Activated T-helper 2 cell treated with anti-CD3 and anti-CD28 coated beads, Interferon-gamma antibody, Interleukin-2, Interleukin-4, amounts not matched to agents 10 μg/mL and 5 μg/mL and 100 μg/mL, durations not matched to agents 14 hours and 24 hours and 36 hours (primary cell): ENCODE measurements at regions of chr7 and their contacts with region 1.

Region 1: GRCh38 chr7:816300-816750 is 16.0 kb upstream of the SUN1 start:
- DNase-seq: peak; percentile 95
- H3K4me3 Mint-ChIP-seq: peak overlapping the region; percentile 69
- H3K27ac Mint-ChIP-seq: no peak overlapping the region
- H3K4me1 Mint-ChIP-seq: peaks cover 41% of the 10 kb centered on the region
- H3K27me3 Mint-ChIP-seq: peaks cover 23% of the 10 kb centered on the region

Region 2: DNA sequence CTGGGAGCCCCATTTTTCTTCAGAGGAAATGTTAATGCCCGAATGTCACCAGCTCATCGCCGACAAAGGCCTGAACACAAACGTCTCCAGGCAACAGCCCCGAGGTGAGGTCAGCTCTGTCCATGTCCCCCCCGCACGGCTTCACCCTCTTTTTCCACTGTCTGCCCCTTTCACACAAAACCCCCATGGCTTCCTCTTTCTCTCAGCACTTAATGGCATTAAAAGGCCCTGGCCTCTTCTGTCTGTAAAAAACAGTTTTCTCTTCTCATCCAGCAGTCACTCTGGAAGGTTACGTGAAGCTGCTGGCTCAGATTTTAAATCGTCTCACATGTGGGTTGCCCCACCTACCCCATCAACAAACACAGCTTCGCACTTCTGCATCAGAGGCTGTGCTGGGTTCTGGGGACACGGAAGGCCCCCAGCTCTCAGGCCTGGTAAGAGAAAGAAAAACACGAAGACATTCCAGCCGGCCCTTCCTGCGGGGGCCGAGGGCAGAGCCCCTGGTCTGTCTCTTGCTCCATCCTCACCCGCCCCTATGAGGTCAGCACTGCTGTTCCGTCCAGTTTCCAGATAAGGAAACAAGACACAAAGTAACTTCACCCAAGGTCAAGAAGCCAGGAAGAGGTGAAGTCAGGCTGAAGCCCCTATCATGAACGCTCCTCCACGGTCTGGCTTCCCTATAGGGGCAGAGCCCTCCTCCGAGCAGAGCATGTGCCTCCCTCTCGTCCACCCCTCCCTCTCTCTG is 205.6 kb before region 1 on chr7:
- intact Hi-C with region 1: loop called (anchors 10 kb)
- DNase-seq: no peak
- H3K4me3 Mint-ChIP-seq: no peak overlapping the region
- H3K27ac Mint-ChIP-seq: peak overlapping the region; percentile 48
- H3K4me1 Mint-ChIP-seq: peaks cover 34% of the 10 kb centered on the region
- H3K27me3 Mint-ChIP-seq: no peaks in the 10 kb centered on the region

Region 3: DNA sequence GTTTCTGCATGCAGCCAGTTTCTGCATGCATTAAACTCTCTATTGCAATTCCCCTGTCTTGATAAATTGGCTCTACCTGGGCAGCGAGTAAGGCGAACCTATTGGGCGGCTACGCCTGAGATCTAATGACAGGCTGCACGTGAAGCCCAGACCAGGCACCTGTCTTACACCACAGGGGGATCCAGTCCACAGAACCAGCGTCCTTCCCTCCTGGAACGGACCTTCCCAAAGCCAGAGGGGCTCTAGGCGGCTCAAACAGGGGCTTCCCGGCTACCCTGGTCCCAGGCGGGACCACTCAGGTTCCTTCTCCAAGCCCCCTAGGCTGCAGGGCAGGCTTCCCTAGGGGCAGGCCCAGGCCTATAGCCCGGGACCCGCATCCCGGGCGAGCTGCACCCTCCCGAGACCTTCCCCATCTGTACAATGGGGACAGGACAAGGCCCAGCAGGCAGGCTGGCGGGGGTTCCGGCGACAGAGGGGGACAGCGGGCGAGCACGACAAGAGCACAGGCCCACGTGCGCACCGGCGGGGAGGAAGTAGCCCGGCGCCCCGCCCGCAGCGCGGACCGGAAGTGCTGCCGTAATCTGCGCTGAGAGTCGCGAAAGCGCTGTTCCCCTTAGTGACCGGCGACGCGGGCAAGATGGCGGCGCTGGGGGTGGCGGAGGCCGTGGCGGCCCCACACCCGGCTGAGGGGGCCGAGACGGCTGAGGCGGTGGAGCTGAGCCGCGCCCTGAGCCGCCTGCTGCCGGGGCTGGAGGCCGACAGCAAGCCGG is 90.1 kb before region 1 on chr7 and contains the start of gene DNAAF5:
- intact Hi-C with region 1: loop called (anchors 5 kb)
- DNase-seq: peak; percentile 85
- H3K4me3 Mint-ChIP-seq: peak within 1 kb of the TSS; percentile 92
- H3K27ac Mint-ChIP-seq: peak within 1 kb of the TSS; percentile 91
- H3K4me1 Mint-ChIP-seq: peaks cover 17% of the 10 kb centered on the region
- H3K27me3 Mint-ChIP-seq: no peaks in the 10 kb centered on the region
- total RNA-seq, gene DNAAF5: 41.5 and 41.7 TPM in 2 replicates

Region 4: GRCh38 chr7:831596-832166 is 15.4 kb after region 1 on chr7:
- intact Hi-C with region 1: loop called (anchors 1 kb)
- DNase-seq: no peak
- H3K4me3 Mint-ChIP-seq: peak overlapping the region; percentile 69
- H3K27ac Mint-ChIP-seq: peak overlapping the region; percentile 93
- H3K4me1 Mint-ChIP-seq: peaks cover 30% of the 10 kb centered on the region
- H3K27me3 Mint-ChIP-seq: no peaks in the 10 kb centered on the region